ENCODE measurements at regions of chrX and their contacts with region 1.

Region 1: DNA sequence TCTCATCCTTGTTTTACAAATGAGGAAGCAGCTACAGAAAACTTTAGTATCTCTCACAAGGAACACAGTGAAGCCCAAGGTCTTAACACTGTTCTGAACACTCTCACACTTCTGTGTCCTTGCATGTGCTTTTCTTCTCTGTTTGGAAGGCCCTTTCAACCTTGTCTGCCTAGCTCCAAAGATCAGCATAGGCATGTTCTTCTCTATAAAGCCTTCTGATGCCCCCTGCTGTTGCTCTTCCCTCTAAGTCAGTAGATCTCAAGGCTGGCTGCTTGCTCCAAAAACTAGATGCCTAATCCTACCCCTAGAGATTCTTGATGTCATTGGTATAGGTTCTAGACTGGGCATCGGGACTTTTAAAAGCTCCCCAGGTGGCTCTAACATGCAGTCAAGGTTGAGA is 5.9 kb downstream of the APOO start:
- H3K4me3 ChIP-seq: no peak overlapping the region
- H3K27ac ChIP-seq: no peak overlapping the region
- H3K4me1 ChIP-seq: peaks cover 18% of the 10 kb centered on the region
- CTCF ChIP-seq: no peak; the same call in 1 of the 2 replicates

Region 2: DNA sequence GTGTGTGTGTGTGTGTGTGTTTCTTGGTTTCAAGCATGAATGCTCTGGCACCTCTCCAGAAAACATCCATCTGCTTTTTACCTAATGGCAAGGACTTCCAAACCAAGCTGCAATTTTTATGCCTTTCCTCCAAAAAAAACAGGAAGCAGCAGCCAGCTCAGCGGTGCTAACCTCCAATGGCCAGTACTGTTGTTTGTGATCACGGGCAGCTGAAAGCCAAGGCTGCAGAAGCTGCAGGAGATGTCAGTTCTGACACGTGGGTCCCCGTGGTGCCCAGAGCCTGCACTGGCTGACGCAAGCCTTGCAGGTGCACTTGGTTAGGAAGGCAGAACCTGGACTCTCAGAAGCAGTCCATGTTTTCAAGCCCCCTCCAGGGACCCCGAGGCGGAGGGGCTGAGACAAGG is 1215.7 kb before region 1 on chrX:
- CTCF ChIA-PET with region 1: no interaction called
- POLR2A ChIA-PET with region 1: no interaction called
- H3K4me3 ChIP-seq: no peak overlapping the region
- H3K27ac ChIP-seq: no peak overlapping the region
- H3K4me1 ChIP-seq: no peaks in the 10 kb centered on the region
- CTCF ChIP-seq: no peak

Region 3: DNA sequence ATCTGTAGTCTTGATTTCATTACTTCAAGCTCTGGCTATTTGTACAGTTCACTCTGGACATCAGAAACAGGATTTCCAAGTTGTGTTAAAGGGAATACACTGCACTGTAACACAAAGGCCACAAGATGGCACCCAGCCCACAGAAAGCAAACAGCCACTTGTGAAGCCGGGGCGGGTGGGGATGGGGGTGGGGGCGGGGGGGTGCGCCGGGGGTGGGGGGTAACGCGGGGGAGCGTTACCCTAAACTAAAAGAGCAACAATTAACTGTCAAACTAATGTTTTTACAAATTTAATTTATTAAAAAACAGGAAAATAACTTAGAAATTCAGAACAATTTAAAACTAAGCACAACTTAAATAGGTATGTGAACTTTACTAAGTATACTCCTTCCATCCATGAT is 207.2 kb before region 1 on chrX:
- CTCF ChIA-PET with region 1: interaction called, 130 read pairs
- POLR2A ChIA-PET with region 1: no interaction called
- H3K4me3 ChIP-seq: no peak overlapping the region
- H3K27ac ChIP-seq: no peak overlapping the region
- H3K4me1 ChIP-seq: no peaks in the 10 kb centered on the region
- CTCF ChIP-seq: no peak

Region 4: DNA sequence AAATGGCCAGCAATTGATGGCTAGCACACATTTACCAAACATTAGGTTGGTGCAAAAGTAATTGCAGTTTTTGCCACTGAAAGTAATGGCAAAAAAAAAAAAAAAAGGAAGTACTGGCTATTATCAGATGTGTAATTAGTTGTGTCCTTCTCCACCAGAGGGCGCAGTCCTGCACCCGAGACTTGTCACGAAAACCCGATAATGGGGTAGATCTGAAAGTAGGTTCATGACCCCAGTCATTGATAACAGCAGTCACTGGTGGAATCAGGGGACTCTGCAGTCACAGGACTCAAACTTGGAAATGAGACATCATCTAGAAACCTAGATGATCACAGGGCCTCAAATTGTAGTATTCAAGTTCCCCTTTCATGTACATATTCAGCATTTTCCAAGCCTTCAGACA is 145.6 kb before region 1 on chrX:
- CTCF ChIA-PET with region 1: interaction called, 20 read pairs
- POLR2A ChIA-PET with region 1: no interaction called
- H3K4me3 ChIP-seq: no peak overlapping the region
- H3K27ac ChIP-seq: no peak overlapping the region
- H3K4me1 ChIP-seq: no peaks in the 10 kb centered on the region
- CTCF ChIP-seq: peak; percentile 33; the same call in 1 of the 2 replicates

Region 5: DNA sequence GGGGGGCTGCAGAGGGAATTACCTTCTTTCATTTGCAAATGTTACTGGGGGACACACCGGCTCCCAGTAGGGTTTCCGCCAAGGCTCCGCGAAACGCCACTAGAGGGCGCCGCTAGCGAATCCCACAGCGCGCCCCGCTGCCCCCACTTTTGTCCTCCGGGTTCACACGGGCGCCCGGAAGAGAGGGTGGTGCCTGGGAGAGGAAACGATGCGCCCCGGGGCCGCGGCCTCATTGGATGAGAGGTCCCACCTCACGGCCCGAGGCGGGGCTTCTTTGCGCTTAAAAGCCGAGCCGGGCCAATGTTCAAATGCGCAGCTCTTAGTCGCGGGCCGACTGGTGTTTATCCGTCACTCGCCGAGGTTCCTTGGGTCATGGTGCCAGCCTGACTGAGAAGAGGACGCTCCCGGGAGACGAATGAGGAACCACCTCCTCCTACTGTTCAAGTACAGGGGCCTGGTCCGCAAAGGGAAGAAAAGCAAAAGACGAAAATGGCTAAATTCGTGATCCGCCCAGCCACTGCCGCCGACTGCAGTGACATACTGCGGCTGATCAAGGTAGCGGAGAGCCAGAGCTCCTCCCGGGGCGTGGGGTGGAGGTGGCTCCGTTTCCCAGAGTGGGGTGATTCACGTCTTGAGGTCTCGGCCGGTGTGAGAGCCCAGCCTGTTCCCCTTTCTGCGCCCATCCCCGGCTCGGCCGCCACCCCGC is 118.8 kb before region 1 on chrX and contains the start of gene SAT1:
- CTCF ChIA-PET with region 1: interaction called, 65 read pairs
- POLR2A ChIA-PET with region 1: interaction called, 79 read pairs
- H3K4me3 ChIP-seq: peak within 1 kb of the TSS; percentile 50
- H3K27ac ChIP-seq: peak within 1 kb of the TSS; percentile 87
- H3K4me1 ChIP-seq: no peaks in the 10 kb centered on the region
- CTCF ChIP-seq: peak; percentile 71; the same call in 1 of the 2 replicates

Region 6: DNA sequence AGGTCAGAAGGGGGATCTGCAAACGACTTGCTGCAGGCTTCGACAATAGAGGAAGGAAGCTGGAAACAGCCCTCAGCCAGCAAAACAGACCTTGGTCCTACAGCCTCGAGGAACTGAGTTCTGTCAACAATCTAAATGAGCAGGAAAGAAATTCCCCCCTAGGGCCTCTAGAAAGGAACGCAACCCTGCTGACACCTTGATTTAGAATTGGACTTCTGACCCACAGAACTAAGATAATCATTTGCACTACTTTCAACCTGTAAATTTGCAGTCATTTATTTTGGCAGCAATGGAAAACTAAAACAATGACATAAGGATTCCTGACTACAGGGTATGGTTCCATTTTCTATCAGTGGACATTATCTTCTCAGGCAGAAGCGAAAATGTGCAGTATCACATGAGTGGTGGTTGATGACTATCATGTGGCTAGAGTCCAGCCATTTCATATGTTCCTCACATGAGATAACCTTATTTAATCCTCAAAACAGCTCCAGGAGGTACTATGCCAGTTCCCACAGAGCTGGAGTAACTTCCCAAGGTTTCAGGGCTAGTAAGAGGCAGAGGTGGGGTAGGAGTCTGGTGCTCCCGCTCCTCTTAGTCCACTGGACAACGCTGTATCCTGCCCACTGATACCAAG is 57.2 kb before region 1 on chrX:
- CTCF ChIA-PET with region 1: interaction called, 11 read pairs
- POLR2A ChIA-PET with region 1: no interaction called
- H3K4me3 ChIP-seq: no peak overlapping the region
- H3K27ac ChIP-seq: peak overlapping the region; percentile 27
- H3K4me1 ChIP-seq: peaks cover 3% of the 10 kb centered on the region; the same call in 1 of the 2 replicates
- CTCF ChIP-seq: no peak

Region 7: GRCh38 chrX:23888887-23889501 is 12.8 kb before region 1 on chrX:
- CTCF ChIA-PET with region 1: interaction called, 20 read pairs
- POLR2A ChIA-PET with region 1: interaction called, 7 read pairs
- H3K4me3 ChIP-seq: no peak overlapping the region
- H3K27ac ChIP-seq: no peak overlapping the region
- H3K4me1 ChIP-seq: peaks cover 10% of the 10 kb centered on the region
- CTCF ChIP-seq: no peak

Region 8: DNA sequence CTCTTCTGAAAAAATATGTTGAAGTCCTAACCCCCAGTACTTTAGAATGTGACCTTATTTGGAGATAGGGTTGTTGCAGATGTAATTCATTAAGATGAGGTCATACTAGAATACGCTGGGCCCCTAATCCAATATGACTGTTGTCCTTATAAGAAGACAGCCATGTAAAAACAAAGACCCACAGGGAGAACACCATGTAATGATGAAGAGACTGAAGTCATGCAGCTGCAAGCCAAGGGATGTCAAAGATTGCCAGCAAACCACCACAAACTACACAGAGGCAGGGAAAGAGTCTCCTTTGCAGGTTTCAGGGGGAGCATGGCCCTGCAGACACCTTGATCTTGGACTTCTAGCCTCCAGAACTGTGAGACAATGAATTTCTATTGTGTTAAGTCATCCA is 43.4 kb after region 1 on chrX:
- CTCF ChIA-PET with region 1: no interaction called
- POLR2A ChIA-PET with region 1: no interaction called
- H3K4me3 ChIP-seq: no peak overlapping the region
- H3K27ac ChIP-seq: peak overlapping the region; percentile 11; the same call in 1 of the 2 replicates
- H3K4me1 ChIP-seq: no peaks in the 10 kb centered on the region; the same call in 1 of the 2 replicates
- CTCF ChIP-seq: no peak

Region 9: DNA sequence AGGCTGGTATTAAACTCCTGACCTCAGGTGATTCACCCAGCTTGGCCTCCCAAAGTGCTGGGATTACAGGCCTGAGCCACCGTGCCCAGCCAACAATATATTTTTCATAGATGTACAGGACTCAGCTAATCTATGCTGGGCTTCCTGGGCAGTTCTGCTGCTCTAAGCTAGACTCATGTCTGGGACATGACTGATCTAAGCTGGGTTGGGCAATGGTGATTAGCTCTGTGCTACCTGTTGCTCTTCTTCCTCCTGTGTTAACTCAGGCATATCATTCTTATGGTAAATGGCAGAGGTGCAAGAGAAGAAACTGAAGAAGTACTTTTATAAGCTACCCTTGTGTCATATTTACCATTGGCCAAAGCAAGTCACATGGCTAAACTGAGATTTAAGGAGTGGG is 423.4 kb after region 1 on chrX:
- CTCF ChIA-PET with region 1: no interaction called
- POLR2A ChIA-PET with region 1: no interaction called
- H3K4me3 ChIP-seq: no peak overlapping the region
- H3K27ac ChIP-seq: no peak overlapping the region
- H3K4me1 ChIP-seq: no peaks in the 10 kb centered on the region
- CTCF ChIP-seq: no peak